H1 (cell line): ENCODE measurements at regions of chr19 and their contacts with region 1.

Region 1: GRCh38 chr19:14183741-14184350 is 22.1 kb downstream of the ADGRL1 start:
- DNase-seq: no peak
- H3K4me3 ChIP-seq: no peak overlapping the region
- H3K27ac ChIP-seq: no peak overlapping the region
- H3K4me1 ChIP-seq: no peaks in the 10 kb centered on the region
- H3K27me3 ChIP-seq: no peaks in the 10 kb centered on the region
- CTCF ChIP-seq: no peak
- EP300 ChIP-seq: no peak
- POLR2A ChIP-seq: no peak
- RAD21 ChIP-seq: no peak

Region 2: GRCh38 chr19:14198384-14199376 is 14.8 kb after region 1 on chr19:
- CTCF ChIA-PET with region 1: interaction called, 24 read pairs
- POLR2A ChIA-PET with region 1: no interaction called
- DNase-seq: no peak
- H3K4me3 ChIP-seq: no peak overlapping the region
- H3K27ac ChIP-seq: no peak overlapping the region
- H3K4me1 ChIP-seq: peaks cover 0 to 16% (median 10%) of the 10 kb centered on the region in 4 experiments; a peak in 6 of 7 replicates
- H3K27me3 ChIP-seq: no peaks in the 10 kb centered on the region
- CTCF ChIP-seq: peak; percentile 37 to 53 (median 41)
- EP300 ChIP-seq: no peak
- POLR2A ChIP-seq: no peak
- RAD21 ChIP-seq: peak; percentile 40 to 52; a peak in 3 of 4 replicates

Region 3: GRCh38 chr19:14214580-14214979 is 30.7 kb after region 1 on chr19:
- CTCF ChIA-PET with region 1: no interaction called
- POLR2A ChIA-PET with region 1: no interaction called
- DNase-seq: no peak
- H3K4me3 ChIP-seq: no peak overlapping the region
- H3K27ac ChIP-seq: no peak overlapping the region
- H3K4me1 ChIP-seq: peaks cover 0 to 10% (median 1%) of the 10 kb centered on the region in 4 experiments; a peak in 3 of 7 replicates
- H3K27me3 ChIP-seq: no peaks in the 10 kb centered on the region; a peak in 1 of 7 replicates
- CTCF ChIP-seq: no peak
- EP300 ChIP-seq: no peak
- POLR2A ChIP-seq: no peak
- RAD21 ChIP-seq: no peak

Region 4: DNA sequence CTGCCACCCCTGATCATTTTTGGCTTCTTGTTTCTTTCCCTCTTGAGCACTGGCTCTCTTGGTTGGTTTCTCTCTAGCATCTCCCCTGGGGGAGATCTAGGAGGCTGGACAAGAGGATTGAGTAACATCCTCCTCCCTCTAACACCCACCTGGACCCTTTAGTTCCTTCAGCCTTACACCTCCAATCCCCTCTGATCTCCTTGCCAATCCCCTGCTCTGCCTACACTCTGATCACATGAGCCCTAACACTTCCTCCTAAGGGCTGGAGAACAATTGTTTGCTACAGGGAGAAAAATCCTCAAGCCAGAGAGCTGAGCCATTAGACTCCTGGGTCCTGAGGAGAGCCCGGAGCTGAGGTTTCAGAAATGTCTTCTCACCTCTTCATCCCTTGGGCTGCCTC is 88.0 kb after region 1 on chr19:
- CTCF ChIA-PET with region 1: no interaction called
- POLR2A ChIA-PET with region 1: no interaction called
- DNase-seq: no peak
- H3K4me3 ChIP-seq: no peak overlapping the region
- H3K27ac ChIP-seq: no peak overlapping the region
- H3K4me1 ChIP-seq: peaks cover 0 to 3% (median 0%) of the 10 kb centered on the region in 4 experiments; a peak in 1 of 7 replicates
- H3K27me3 ChIP-seq: no peaks in the 10 kb centered on the region; a peak in 2 of 7 replicates
- CTCF ChIP-seq: no peak
- EP300 ChIP-seq: no peak
- POLR2A ChIP-seq: no peak
- RAD21 ChIP-seq: no peak